Left ventricle myocardium inferior (tissue), 1 donor: ENCODE measurements at regions of chr9 and their contacts with region 1.

Region 1: GRCh38 chr9:76704593-76705204 is 59.5 kb upstream of the PCA3 start:
- DNase-seq: no peak
- H3K4me3 ChIP-seq: no peak overlapping the region
- H3K27ac ChIP-seq: no peak overlapping the region
- H3K4me1 ChIP-seq: no peaks in the 10 kb centered on the region
- H3K27me3 ChIP-seq: peaks cover 82% of the 10 kb centered on the region
- CTCF ChIP-seq: peak; percentile 75

Region 2: DNA sequence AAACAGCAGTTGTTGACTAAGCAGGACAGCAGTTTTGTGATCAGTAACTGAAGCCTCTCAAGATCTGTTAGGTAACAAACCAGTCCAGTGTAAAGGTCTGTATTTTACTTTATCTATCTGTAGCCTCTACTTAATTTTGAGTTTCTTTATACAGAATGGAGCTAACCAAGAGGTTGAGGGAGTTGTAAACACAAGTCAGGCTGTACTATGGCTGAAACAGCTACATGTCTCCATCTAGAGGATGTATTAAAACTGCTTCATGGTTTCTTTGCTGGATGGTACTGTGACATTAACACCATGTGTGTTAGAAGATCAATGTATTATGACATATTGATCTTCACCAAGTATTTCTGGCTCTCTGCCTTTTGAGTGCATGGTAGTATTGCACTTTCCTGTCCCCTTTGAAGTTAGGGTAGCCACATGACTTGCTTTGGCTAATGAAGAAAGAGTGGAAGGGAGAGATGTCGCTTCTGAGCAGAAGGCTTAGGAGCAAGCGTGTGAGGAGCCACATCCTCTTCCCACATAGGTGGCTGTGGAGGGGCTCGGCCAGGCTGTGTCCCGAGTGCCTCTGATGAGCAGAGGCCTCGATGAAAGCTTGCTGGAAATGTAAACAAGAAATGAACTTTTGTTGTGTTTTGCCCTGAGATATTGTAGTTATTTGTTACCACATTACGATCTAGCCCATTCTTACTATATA is 46.0 kb before region 1 on chr9:
- intact Hi-C with region 1: loop called (anchors 2 kb)
- DNase-seq: no peak
- H3K4me3 ChIP-seq: no peak overlapping the region
- H3K27ac ChIP-seq: no peak overlapping the region
- H3K4me1 ChIP-seq: peaks cover 17% of the 10 kb centered on the region
- H3K27me3 ChIP-seq: no peaks in the 10 kb centered on the region
- CTCF ChIP-seq: peak; percentile 69